ENCODE measurements at regions of chr7 and their contacts with region 1.

Region 1: GRCh38 chr7:76262683-76263402 is 39.6 kb upstream of the HSPB1 start:
- DNase-seq: no peak
- H3K4me3 ChIP-seq: no peak overlapping the region
- H3K27me3 ChIP-seq: peaks cover 8% of the 10 kb centered on the region
- CTCF ChIP-seq: peak; percentile 86

Region 2: DNA sequence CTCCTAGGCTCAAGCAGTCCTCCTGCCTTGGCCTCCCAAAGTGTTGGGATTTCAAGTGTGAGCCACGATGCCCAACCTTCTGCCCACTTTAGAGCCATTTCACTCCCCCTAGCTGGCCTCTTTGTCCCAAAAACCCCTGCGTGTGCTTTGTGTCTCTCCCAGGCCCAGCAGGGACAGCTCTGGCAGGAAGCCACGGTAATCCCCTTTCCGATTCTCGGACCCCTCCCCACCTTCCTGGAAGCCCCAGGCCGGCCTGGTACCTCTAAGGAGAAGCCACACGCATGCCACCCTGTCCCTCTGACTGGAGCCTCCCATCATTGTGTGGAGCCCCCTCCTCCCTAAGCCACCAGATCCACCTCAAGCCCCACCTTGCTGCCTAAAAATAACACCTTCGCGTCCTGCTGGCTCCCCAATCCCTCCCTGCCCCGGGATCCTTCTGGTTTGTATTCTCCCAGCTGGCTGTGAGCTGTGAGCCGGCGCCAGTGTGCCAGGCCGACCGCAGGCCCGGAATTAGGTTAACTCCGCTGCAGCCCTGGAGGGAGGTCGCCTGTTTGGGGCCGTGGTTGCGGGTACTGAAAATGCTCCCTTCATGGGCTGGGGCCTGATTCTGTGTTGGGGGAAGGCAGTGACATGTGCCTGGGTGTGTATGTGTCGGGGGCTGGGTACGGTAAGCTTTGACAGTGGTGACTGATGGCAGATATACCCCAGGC is 77.5 kb before region 1 on chr7:
- CTCF ChIA-PET with region 1: interaction called, 14 read pairs
- POLR2A ChIA-PET with region 1: no interaction called
- DNase-seq: no peak
- H3K4me3 ChIP-seq: no peak overlapping the region
- H3K27me3 ChIP-seq: no peaks in the 10 kb centered on the region
- CTCF ChIP-seq: no peak

Region 3: DNA sequence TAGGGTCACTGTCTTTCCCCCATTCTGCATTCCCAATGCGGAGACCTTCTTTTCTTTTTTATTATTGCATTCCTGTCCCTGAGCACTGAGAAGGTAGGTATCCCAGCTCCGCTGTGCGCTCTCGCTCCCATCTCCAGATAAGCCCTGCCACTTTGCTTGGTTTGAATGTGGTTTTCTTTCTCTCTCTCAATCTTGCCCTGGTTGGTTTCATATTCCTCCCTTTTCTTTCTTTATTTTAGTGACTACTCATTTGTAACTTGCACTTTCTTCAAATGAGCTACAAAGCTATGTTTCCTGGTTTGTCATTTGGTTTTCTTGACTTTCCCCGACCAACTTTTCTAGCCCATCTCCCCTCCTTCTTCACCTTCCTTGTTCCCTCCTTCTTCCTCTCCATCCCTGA is 10.7 kb after region 1 on chr7:
- CTCF ChIA-PET with region 1: interaction called, 17 read pairs
- POLR2A ChIA-PET with region 1: no interaction called
- DNase-seq: no peak
- H3K4me3 ChIP-seq: no peak overlapping the region
- H3K27me3 ChIP-seq: peaks cover 36% of the 10 kb centered on the region
- CTCF ChIP-seq: no peak

Region 4: DNA sequence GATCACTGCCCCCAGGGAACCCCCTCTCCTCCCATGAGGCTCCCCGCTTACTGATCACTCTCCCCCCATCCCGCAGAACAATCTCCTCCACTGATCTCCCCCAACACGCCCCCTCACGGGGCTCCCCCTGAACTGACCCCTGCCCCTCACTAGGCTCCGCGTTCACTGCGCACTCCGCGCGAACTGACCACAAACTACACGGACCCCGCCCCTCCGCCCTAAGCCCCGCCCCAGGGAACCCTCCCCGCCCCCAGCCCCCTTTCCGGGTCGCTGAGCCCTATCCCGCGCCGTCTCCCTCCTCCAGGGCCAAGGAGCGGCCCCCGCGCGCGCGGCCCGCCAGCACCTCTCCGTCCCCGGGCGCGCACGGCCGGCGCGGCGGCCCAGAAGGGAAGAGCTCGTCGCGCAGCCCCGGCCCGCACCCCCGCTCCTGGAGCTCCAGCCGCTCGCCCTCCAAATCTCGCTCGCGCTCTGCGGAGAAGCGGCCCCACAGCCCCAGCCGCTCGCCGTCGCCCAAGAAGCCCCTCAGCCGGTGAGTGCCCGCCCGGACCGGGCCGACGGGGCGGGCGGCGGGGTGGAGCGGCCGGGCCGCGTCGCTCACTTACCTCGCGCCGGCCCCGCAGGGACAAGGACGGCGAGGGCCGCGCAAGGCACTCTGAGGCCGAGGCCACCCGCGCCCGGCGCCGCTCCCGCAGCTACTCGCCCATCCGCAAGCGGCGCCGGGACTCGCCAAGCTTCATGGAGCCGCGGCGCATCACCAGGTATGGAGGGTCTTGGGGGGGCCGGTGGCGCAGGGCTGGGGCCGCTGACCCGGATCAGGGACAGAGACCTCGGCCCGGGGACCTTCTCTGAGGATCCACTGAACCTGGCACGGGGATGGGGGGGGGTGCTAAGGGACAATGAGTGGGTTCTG is 19.8 kb after region 1 on chr7:
- CTCF ChIA-PET with region 1: interaction called, 10 read pairs
- POLR2A ChIA-PET with region 1: no interaction called
- DNase-seq: no peak
- H3K4me3 ChIP-seq: peak overlapping the region; percentile 36
- H3K27me3 ChIP-seq: peaks cover 26% of the 10 kb centered on the region
- CTCF ChIP-seq: no peak

Measured in BJ (cell line).